ENCODE measurements at regions of chr1 and their contacts with region 1.

Region 1: DNA sequence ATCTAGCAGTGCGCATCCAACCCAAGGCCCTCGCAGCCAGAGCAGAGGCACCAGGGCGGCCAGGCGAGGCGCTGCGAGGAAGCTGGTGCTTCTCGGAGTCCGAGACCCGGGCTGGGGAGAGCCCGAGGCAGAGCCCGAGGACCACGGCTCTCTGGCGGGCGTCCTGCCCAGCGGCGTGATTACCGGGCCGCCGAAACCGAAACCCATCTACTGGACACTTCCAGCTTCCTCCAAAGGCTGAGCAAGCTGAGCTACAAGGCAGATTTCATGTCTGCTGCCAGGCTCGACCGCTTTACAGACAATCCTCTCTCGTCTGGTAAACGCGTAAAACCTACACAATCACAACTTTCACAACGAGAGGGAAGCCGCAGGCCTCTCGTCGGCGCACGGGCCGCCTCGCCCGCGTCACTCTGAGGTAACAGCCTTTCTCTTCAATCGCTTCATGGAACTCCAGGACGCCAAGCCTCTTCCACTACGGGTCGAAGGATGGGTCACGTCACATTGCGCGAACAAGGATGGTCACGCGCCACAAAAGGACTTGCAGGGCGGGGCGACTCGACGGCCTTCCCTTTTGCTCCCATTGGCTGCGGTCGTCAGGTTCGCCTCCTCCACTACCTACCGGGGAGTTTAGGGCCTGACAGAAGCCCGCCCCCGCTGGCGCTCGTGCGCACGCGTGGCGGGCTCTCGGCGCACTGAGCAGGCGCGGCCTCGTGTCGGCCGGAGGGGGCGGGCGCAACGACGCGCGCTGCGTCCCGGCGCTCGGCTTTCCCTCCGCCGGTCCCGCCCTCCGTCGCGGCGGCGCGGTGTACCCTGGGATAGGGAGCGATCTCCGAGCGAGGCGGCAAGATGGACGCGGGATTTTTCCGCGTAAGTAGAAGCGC is at the start of gene SRRM1:
- DNase-seq: peak; percentile 99
- ATAC-seq: peak; percentile 93
- H3K4me3 Mint-ChIP-seq: peak within 1 kb of the TSS; percentile 80
- H3K27ac Mint-ChIP-seq: peak within 1 kb of the TSS; percentile 98
- H3K4me1 Mint-ChIP-seq: peaks cover 54% of the 10 kb centered on the region
- H3K27me3 Mint-ChIP-seq: no peaks in the 10 kb centered on the region
- total RNA-seq, gene SRRM1: 234 to 288 TPM

Region 2: GRCh38 chr1:23959041-23959460 is 683.7 kb before region 1 on chr1:
- CTCF ChIA-PET with region 1: no interaction called
- POLR2A ChIA-PET with region 1: no interaction called
- intact Hi-C with region 1: loop called in 1 of 2 experiments (anchors 1 kb)
- DNase-seq: peak; percentile 97
- ATAC-seq: peak; percentile 82
- H3K4me3 Mint-ChIP-seq: peak overlapping the region; percentile 100
- H3K27ac Mint-ChIP-seq: peak overlapping the region; percentile 100
- H3K4me1 Mint-ChIP-seq: peaks cover 53% of the 10 kb centered on the region
- H3K27me3 Mint-ChIP-seq: no peaks in the 10 kb centered on the region

Region 3: GRCh38 chr1:24201941-24202440 is 440.7 kb before region 1 on chr1:
- CTCF ChIA-PET with region 1: interaction called, 4 read pairs
- POLR2A ChIA-PET with region 1: no interaction called
- intact Hi-C with region 1: loop called in 1 of 2 experiments (anchors 2 kb)
- DNase-seq: peak; percentile 78
- ATAC-seq: no peak
- H3K4me3 Mint-ChIP-seq: no peak overlapping the region
- H3K27ac Mint-ChIP-seq: no peak overlapping the region
- H3K4me1 Mint-ChIP-seq: peaks cover 27% of the 10 kb centered on the region
- H3K27me3 Mint-ChIP-seq: peaks cover 2% of the 10 kb centered on the region

Region 4: GRCh38 chr1:24502709-24503058 is 140.0 kb before region 1 on chr1 and contains the start of gene RCAN3:
- CTCF ChIA-PET with region 1: no interaction called
- POLR2A ChIA-PET with region 1: no interaction called
- intact Hi-C with region 1: loop called (anchors 1 to 10 kb)
- DNase-seq: peak; percentile 95
- ATAC-seq: peak; percentile 75
- H3K4me3 Mint-ChIP-seq: peak within 1 kb of the TSS; percentile 86
- H3K27ac Mint-ChIP-seq: peak within 1 kb of the TSS; percentile 94
- H3K4me1 Mint-ChIP-seq: peaks cover 59% of the 10 kb centered on the region
- H3K27me3 Mint-ChIP-seq: no peaks in the 10 kb centered on the region
- total RNA-seq, gene RCAN3: 62.3 to 67.5 TPM

Region 5: GRCh38 chr1:24744911-24745710 is 102.4 kb after region 1 on chr1 and contains the start of gene CLIC4:
- CTCF ChIA-PET with region 1: no interaction called
- POLR2A ChIA-PET with region 1: no interaction called
- intact Hi-C with region 1: loop called (anchors 1 kb)
- DNase-seq: peak; percentile 100
- ATAC-seq: peak; percentile 93
- H3K4me3 Mint-ChIP-seq: peak within 1 kb of the TSS; percentile 90
- H3K27ac Mint-ChIP-seq: peak within 1 kb of the TSS; percentile 90
- H3K4me1 Mint-ChIP-seq: peaks cover 44% of the 10 kb centered on the region
- H3K27me3 Mint-ChIP-seq: no peaks in the 10 kb centered on the region
- total RNA-seq, gene CLIC4: 29.8 to 33.1 TPM

Region 6: GRCh38 chr1:25247024-25247828 is 604.5 kb after region 1 on chr1 and contains the start of gene RSRP1:
- CTCF ChIA-PET with region 1: no interaction called
- POLR2A ChIA-PET with region 1: no interaction called
- intact Hi-C with region 1: loop called in 1 of 2 experiments (anchors 1 kb)
- DNase-seq: peak; percentile 100
- ATAC-seq: peak; percentile 90
- H3K4me3 Mint-ChIP-seq: peak within 1 kb of the TSS; percentile 96
- H3K27ac Mint-ChIP-seq: peak within 1 kb of the TSS; percentile 99
- H3K4me1 Mint-ChIP-seq: peaks cover 40% of the 10 kb centered on the region
- H3K27me3 Mint-ChIP-seq: no peaks in the 10 kb centered on the region
- total RNA-seq, gene RSRP1: 86.8 to 120 TPM

Measured in activated CD4-positive, alpha-beta T cell treated with anti-CD3 and anti-CD28 coated beads for 36 hours (primary cell).